PC-9 (cell line): ENCODE measurements at regions of chr1 and their contacts with region 1.

Region 1: GRCh38 chr1:54488779-54489626 is 59.0 kb upstream of the ACOT11 start:
- DNase-seq: peak; percentile 51 to 87
- H3K4me3 ChIP-seq: peak overlapping the region; percentile 64
- H3K27ac ChIP-seq: peak overlapping the region; percentile 28; the same call in 1 of the 2 replicates
- H3K4me1 ChIP-seq: peaks cover 5% of the 10 kb centered on the region; the same call in 1 of the 2 replicates
- H3K27me3 ChIP-seq: no peaks in the 10 kb centered on the region
- CTCF ChIP-seq: peak; percentile 97

Region 2: GRCh38 chr1:54070171-54070837 is 418.7 kb before region 1 on chr1:
- CTCF ChIA-PET with region 1: interaction called, 9 read pairs
- POLR2A ChIA-PET with region 1: no interaction called
- intact Hi-C with region 1: loop called (anchors 1 kb)
- DNase-seq: peak in 1 of 2 experiments; percentile 55
- H3K4me3 ChIP-seq: no peak overlapping the region
- H3K27ac ChIP-seq: no peak overlapping the region
- H3K4me1 ChIP-seq: no peaks in the 10 kb centered on the region
- H3K27me3 ChIP-seq: no peaks in the 10 kb centered on the region
- CTCF ChIP-seq: peak; percentile 77

Region 3: DNA sequence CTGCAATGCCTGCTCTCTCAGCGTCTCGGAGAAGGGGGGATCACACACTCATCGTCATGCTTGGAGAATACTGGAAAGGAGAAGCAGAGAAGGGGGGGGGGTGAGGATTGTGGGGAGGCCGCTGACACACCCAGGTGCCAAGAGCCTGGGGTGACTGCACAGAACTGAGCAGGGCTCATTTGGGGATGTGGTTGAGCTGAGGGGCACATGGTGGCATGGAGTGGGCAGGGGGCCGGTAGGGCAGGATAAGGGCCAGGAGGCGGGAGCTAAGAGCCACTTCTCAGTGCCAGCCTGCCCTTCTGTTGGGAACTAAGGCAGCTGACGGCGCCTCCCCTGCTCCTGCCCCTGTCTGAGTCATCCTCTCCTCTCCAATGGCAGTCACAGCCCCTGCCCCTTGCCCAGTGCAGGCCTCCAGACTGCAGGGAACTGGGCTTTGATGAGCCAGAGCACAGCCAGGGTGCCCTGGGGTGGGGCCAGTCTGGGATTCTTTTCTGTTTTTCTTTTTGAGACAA is 261.9 kb before region 1 on chr1:
- CTCF ChIA-PET with region 1: no interaction called
- POLR2A ChIA-PET with region 1: no interaction called
- intact Hi-C with region 1: loop called (anchors 5 kb)
- DNase-seq: peak; percentile 48 to 84
- H3K4me3 ChIP-seq: no peak overlapping the region
- H3K27ac ChIP-seq: no peak overlapping the region
- H3K4me1 ChIP-seq: 0 out of 2 replicates have a peak, but pooled peaks cover 5% of the 10 kb centered on the region
- H3K27me3 ChIP-seq: no peaks in the 10 kb centered on the region
- CTCF ChIP-seq: no peak

Region 4: GRCh38 chr1:54406339-54407153 is 82.5 kb before region 1 on chr1 and contains the start of gene SSBP3:
- CTCF ChIA-PET with region 1: interaction called, 4 read pairs
- POLR2A ChIA-PET with region 1: no interaction called
- intact Hi-C with region 1: loop called (anchors 1 kb)
- DNase-seq: peak; percentile 76 to 97
- H3K4me3 ChIP-seq: peak within 1 kb of the TSS; percentile 61
- H3K27ac ChIP-seq: no peak within 1 kb of the TSS
- H3K4me1 ChIP-seq: peaks cover 22% of the 10 kb centered on the region
- H3K27me3 ChIP-seq: no peaks in the 10 kb centered on the region
- CTCF ChIP-seq: no peak
- total RNA-seq, gene SSBP3: 26.2 and 26.5 TPM in 2 replicates

Region 5: GRCh38 chr1:54671985-54672608 is 183.1 kb after region 1 on chr1:
- CTCF ChIA-PET with region 1: no interaction called
- POLR2A ChIA-PET with region 1: no interaction called
- intact Hi-C with region 1: loop called (anchors 5 kb)
- DNase-seq: peak; percentile 52 to 73
- H3K4me3 ChIP-seq: no peak overlapping the region
- H3K27ac ChIP-seq: no peak overlapping the region
- H3K4me1 ChIP-seq: no peaks in the 10 kb centered on the region
- H3K27me3 ChIP-seq: no peaks in the 10 kb centered on the region
- CTCF ChIP-seq: peak; percentile 94

Region 6: DNA sequence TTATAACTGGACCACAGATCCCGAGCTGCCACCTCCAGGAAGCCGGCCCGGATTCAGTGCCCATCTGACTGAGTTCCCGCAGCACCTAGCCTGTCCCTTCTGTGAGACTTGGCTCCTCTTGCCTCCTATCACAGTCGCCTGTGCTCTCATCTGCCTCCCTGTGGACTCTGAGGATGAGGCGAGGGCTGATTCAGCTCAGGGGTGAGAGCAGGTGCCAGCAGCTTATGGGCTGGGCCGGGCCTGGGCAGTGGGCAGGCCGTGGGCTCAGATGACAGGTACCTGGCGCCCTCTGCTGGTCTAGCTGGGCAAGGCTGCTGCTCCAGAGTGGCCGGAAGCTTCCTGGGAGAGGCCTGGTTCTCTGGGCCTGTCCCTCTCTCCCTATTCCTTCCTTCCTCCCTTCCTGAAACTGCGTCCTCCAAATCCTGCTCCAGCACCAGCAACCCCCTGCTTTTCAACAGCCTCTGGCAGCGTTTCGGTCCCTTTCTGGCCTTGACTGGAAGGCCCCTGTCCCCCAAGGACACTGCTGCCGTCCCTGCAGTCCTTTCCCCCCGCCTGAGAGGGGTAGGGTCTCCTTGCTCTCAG is 533.1 kb after region 1 on chr1:
- CTCF ChIA-PET with region 1: interaction called, 5 read pairs
- POLR2A ChIA-PET with region 1: no interaction called
- intact Hi-C with region 1: loop called (anchors 1 kb)
- DNase-seq: peak; percentile 82 to 92
- H3K4me3 ChIP-seq: no peak overlapping the region
- H3K27ac ChIP-seq: no peak overlapping the region
- H3K4me1 ChIP-seq: no peaks in the 10 kb centered on the region
- H3K27me3 ChIP-seq: no peaks in the 10 kb centered on the region
- CTCF ChIP-seq: peak; percentile 93